Activated CD8-positive, alpha-beta T cell treated with anti-CD3 and anti-CD28 coated beads for 36 hours (primary cell): ENCODE measurements at regions of chr6 and their contacts with region 1.

Region 1: DNA sequence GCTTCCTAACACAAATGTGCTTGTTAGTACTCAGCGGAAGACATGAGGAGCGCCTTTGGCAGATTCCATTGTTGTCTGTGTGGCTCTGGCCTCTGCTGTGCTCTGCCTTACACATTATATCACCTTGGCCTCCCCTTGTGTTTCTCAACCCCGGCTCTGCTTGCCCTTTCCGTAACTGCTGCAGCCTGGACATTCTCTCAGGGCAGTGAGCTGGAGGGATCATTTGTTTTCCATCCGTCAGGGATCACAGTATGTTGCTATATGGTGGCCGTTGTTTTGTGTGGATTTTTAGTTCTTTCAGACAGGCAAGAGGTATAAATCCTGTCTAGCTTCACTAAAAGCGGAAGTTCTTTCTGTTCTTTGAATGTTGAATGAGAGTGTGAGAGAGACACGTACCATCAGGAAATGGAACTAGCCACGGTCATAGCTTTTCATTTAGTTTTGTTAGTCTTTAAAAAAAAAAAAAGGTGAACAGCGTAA is 175.1 kb downstream of the JARID2 start:
- DNase-seq: no peak
- ATAC-seq: peak; percentile 49
- H3K4me3 Mint-ChIP-seq: peak overlapping the region; percentile 57
- H3K27ac Mint-ChIP-seq: peak overlapping the region; percentile 95
- H3K4me1 Mint-ChIP-seq: peaks cover 56% of the 10 kb centered on the region
- H3K27me3 Mint-ChIP-seq: no peaks in the 10 kb centered on the region
- CTCF ChIP-seq: no peak

Region 2: DNA sequence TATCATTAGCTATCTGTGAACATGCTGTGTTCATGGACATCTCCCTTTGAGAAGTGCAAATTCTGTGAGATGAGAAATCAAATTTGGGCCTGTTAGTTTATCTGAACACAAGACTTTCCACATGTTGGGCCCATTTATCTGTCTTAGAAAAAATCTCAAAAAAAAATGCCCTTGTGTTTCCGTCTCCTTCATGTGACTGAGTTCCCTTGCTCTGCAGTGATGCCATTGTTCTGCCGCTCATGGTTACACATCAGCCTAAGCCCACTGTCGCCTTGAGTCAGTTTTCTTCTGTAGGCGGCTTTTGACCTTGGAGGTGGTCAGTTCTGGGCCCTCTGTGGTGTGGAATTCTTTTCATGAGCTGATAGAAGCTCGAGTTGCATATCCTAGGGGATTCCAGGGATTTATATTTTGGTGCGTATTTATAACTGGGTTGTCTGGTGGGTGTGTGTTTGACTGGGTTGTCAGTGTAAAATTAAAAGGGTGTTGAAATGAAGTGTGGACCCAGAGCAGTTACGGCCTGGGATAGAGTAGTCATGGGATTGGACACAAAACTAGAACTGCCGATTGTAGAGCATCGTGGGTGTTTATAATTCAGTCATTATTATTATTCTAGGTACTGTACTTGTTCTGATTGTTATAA is 18.5 kb before region 1 on chr6:
- CTCF ChIA-PET with region 1: interaction called, 9 read pairs
- POLR2A ChIA-PET with region 1: interaction called, 15 read pairs
- intact Hi-C with region 1: no loop called
- DNase-seq: no peak
- ATAC-seq: no peak
- H3K4me3 Mint-ChIP-seq: no peak overlapping the region
- H3K27ac Mint-ChIP-seq: peak overlapping the region; percentile 73
- H3K4me1 Mint-ChIP-seq: peaks cover 87% of the 10 kb centered on the region
- H3K27me3 Mint-ChIP-seq: no peaks in the 10 kb centered on the region
- CTCF ChIP-seq: no peak

Region 3: DNA sequence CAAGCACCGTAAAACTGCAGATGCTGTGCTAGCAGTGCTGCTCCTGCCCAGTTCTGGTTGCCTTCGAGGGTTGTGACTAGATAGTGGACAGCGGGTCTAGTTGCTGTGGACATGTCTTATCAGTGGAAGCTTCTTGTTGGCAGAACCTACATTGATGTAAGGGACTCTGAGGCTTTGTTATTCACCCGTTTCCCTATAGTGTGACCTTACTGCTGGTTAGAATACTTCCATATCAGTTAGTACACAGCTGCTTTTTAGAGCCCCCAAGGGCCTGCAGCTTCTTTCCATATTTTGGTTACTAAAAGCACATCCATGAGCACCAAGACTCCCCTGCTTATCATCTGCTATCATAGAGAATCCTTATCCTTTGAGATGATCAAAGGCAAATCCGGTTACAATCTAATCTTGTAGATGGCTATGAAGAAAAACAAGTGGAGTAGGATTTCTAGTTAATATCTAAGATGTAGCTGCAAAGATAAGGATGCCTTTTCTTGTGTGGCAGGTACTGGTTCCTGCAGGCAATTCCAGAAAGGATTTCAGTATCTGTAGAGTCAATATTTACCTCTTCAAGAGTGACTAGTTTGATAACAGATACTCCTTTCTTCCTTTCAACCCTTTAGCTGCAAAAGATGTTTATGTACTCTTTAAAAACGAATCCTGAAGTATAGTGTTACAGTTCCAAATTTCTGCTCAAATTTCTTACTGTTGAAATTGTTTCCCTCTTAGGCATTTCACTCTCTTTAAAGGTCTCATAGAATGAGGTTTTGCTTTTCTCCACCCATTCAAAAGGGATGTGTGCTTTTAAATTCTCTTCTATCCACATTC is 11.5 kb before region 1 on chr6:
- CTCF ChIA-PET with region 1: interaction called, 17 read pairs
- POLR2A ChIA-PET with region 1: interaction called, 15 read pairs
- intact Hi-C with region 1: no loop called
- DNase-seq: no peak
- ATAC-seq: no peak
- H3K4me3 Mint-ChIP-seq: no peak overlapping the region
- H3K27ac Mint-ChIP-seq: peak overlapping the region; percentile 86
- H3K4me1 Mint-ChIP-seq: peaks cover 86% of the 10 kb centered on the region
- H3K27me3 Mint-ChIP-seq: no peaks in the 10 kb centered on the region
- CTCF ChIP-seq: no peak

Region 4: DNA sequence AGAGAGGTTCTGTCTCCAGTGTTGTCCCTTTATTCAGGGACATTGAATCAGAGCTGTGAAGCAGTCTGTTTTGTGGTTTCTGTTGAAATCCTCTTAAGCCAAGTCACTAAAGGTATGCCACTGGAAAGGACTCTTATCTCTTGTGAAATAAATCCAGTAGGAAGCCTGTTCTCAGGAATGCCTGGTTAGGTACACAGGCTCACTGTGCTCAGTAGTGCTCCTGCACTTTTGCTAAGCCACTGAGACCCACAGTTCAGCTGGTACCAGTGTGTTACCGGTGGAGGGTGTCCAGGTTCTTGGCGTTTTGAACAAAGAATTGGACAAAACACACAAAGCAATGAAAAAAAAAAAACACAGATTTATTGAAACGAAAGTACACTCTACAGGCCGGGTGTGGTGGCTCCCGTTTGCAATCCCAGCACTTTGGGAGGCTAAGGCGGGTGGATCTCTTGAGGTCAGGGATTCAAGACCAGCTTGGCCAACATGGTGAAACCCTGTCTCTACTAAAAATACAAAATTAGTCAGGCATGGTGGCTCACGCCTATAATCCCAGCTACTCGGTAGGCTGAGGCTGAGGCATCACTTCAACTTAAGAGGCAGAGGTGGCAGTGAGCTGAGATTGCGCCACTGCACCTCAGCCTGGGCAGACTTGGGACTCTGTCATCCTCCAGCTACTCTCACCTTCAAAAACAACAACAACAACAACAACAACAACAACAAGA is 10.9 kb after region 1 on chr6:
- CTCF ChIA-PET with region 1: interaction called, 4 read pairs
- POLR2A ChIA-PET with region 1: interaction called, 16 read pairs
- intact Hi-C with region 1: no loop called
- DNase-seq: no peak
- ATAC-seq: no peak
- H3K4me3 Mint-ChIP-seq: no peak overlapping the region
- H3K27ac Mint-ChIP-seq: peak overlapping the region; percentile 46
- H3K4me1 Mint-ChIP-seq: peaks cover 89% of the 10 kb centered on the region
- H3K27me3 Mint-ChIP-seq: no peaks in the 10 kb centered on the region
- CTCF ChIP-seq: no peak

Region 5: GRCh38 chr6:15441215-15441868 is 20.3 kb after region 1 on chr6:
- CTCF ChIA-PET with region 1: interaction called, 31 read pairs
- POLR2A ChIA-PET with region 1: interaction called, 3 read pairs
- intact Hi-C with region 1: no loop called
- DNase-seq: peak; percentile 45
- ATAC-seq: peak; percentile 40
- H3K4me3 Mint-ChIP-seq: no peak overlapping the region
- H3K27ac Mint-ChIP-seq: no peak overlapping the region
- H3K4me1 Mint-ChIP-seq: peaks cover 60% of the 10 kb centered on the region
- H3K27me3 Mint-ChIP-seq: no peaks in the 10 kb centered on the region
- CTCF ChIP-seq: peak; percentile 86